CD4-positive, alpha-beta T cell (primary cell): ENCODE measurements at regions of chr5 and their contacts with region 1.

Region 1: GRCh38 chr5:14871210-14872069 is at the start of gene ANKH:
- DNase-seq: peak; percentile 58 to 95 (median 82)
- ATAC-seq: peak; percentile 85
- H3K4me3 ChIP-seq: peak within 1 kb of the TSS; percentile 82
- H3K4me3 Mint-ChIP-seq: peak within 1 kb of the TSS; percentile 96
- H3K27ac ChIP-seq: peak within 1 kb of the TSS; percentile 64 to 70
- H3K27ac Mint-ChIP-seq: peak within 1 kb of the TSS; percentile 87
- H3K4me1 ChIP-seq: peaks cover 23% of the 10 kb centered on the region
- H3K4me1 Mint-ChIP-seq: peaks cover 31% of the 10 kb centered on the region
- H3K27me3 ChIP-seq: no peaks in the 10 kb centered on the region
- H3K27me3 Mint-ChIP-seq: no peaks in the 10 kb centered on the region
- CTCF ChIP-seq: no peak
- total RNA-seq, gene ANKH: 69.5 to 72.3 TPM

Region 2: DNA sequence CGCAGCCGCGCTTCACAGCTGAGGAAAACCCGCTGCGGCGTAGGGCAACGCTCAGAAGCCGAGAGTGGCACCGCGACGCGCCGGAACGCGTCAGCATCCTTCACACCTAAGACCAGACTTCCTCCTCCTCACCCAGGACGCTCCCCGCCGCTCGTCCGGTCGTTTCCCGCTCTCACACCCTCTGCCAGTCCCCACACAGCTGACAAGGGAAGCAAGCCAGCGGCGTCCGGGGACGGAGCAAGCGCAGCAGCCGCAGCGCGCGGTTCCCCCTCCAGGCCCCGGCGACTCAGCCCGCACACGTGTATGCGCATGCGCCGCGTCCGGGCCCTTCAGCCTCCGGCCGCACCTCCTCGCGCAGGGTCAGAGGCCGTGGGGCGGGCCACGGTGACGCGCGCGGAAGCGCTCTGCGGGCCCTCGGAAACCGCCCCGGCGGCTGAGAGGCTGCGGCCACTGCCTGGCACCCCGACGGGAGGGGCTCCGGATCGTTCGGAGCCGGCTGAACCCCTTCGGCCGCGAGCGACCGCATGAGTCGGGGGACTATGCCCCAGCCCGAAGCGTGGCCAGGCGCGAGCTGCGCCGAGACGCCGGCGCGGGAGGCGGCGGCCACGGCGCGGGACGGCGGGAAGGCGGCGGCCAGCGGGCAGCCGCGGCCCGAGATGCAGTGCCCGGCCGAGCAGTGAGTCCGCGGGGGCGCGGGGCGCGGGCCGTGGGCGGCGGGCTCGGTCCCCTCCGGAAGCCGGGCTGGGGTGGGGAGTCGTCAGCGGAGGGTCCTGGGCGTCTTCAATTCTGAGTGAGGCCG is 206.9 kb before region 1 on chr5 and contains the start of gene OTULIN:
- CTCF ChIA-PET with region 1: interaction called, 4 read pairs
- POLR2A ChIA-PET with region 1: no interaction called
- intact Hi-C with region 1: loop called in 1 of 2 experiments (anchors 2 kb)
- DNase-seq: peak; percentile 62 to 96 (median 80)
- ATAC-seq: peak; percentile 73
- H3K4me3 ChIP-seq: peak within 1 kb of the TSS; percentile 75
- H3K4me3 Mint-ChIP-seq: peak within 1 kb of the TSS; percentile 90
- H3K27ac ChIP-seq: peak within 1 kb of the TSS; percentile 77 to 82
- H3K27ac Mint-ChIP-seq: peak within 1 kb of the TSS; percentile 90
- H3K4me1 ChIP-seq: peaks cover 52% of the 10 kb centered on the region
- H3K4me1 Mint-ChIP-seq: peaks cover 77% of the 10 kb centered on the region
- H3K27me3 ChIP-seq: no peaks in the 10 kb centered on the region
- H3K27me3 Mint-ChIP-seq: no peaks in the 10 kb centered on the region
- CTCF ChIP-seq: no peak
- total RNA-seq, gene OTULIN: 69.4 to 77.0 TPM

Region 3: GRCh38 chr5:14706615-14707021 is 164.8 kb before region 1 on chr5:
- CTCF ChIA-PET with region 1: interaction called, 5 read pairs
- POLR2A ChIA-PET with region 1: interaction called, 35 read pairs
- intact Hi-C with region 1: loop called in 1 of 2 experiments (anchors 5 kb)
- DNase-seq: peak; percentile 32 to 84 (median 57)
- ATAC-seq: peak; percentile 95
- H3K4me3 ChIP-seq: peak overlapping the region; percentile 7
- H3K4me3 Mint-ChIP-seq: peak overlapping the region; percentile 84
- H3K27ac ChIP-seq: peak overlapping the region; percentile 85 to 87
- H3K27ac Mint-ChIP-seq: peak overlapping the region; percentile 96
- H3K4me1 ChIP-seq: peaks cover 73% of the 10 kb centered on the region
- H3K4me1 Mint-ChIP-seq: peaks cover 93% of the 10 kb centered on the region
- H3K27me3 ChIP-seq: no peaks in the 10 kb centered on the region
- H3K27me3 Mint-ChIP-seq: no peaks in the 10 kb centered on the region
- CTCF ChIP-seq: no peak

Region 4: DNA sequence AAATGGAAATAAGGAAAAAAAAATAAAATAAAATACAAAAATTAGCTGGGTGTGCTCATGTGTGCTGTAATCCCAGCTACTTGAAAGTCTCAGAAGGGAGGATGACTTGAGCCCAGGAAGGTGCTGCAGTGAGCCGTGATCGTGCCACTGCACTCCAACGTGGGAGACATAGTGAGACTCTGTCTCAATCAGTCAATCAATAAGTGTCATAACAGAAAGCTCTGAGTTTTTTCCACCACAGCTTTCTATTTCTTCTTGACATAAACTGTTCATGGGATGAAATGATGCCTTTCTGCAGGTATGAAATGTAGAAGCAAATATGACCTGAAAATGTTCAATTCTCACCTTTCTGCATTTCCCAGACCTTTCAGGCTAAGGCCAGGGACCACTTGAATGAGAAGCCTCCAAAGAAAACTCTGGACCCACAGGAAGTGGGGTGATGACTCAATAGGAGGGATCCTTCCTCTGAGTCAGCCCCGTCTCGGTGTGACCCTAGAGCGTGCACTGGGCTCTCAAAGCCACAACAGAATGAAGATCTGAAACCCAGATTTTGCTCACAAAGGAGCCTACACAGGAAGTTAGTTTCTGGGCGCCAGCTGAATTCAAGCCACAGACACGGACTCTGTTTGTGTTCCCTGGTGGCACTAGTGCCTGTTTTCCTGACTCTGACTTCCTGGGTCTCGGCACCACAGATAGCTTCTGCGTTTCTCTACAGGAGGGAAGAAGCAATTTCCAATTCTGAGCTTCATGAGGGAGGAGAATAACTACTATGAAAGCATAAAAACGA is 61.9 kb before region 1 on chr5:
- CTCF ChIA-PET with region 1: interaction called, 14 read pairs
- POLR2A ChIA-PET with region 1: interaction called, 14 read pairs
- intact Hi-C with region 1: loop called in 1 of 2 experiments (anchors 2 kb)
- DNase-seq: peak; percentile 26 to 87 (median 66)
- ATAC-seq: peak; percentile 88
- H3K4me3 ChIP-seq: peak overlapping the region; percentile 26
- H3K4me3 Mint-ChIP-seq: peak overlapping the region; percentile 71
- H3K27ac ChIP-seq: peak overlapping the region; percentile 53 to 55
- H3K27ac Mint-ChIP-seq: peak overlapping the region; percentile 90
- H3K4me1 ChIP-seq: peaks cover 43% of the 10 kb centered on the region
- H3K4me1 Mint-ChIP-seq: peaks cover 76% of the 10 kb centered on the region
- H3K27me3 ChIP-seq: no peaks in the 10 kb centered on the region
- H3K27me3 Mint-ChIP-seq: no peaks in the 10 kb centered on the region
- CTCF ChIP-seq: no peak

Region 5: GRCh38 chr5:14849516-14850294 is 21.7 kb before region 1 on chr5:
- CTCF ChIA-PET with region 1: no interaction called
- POLR2A ChIA-PET with region 1: interaction called, 11 read pairs
- intact Hi-C with region 1: no loop called
- DNase-seq: no peak
- ATAC-seq: no peak
- H3K4me3 ChIP-seq: no peak overlapping the region
- H3K4me3 Mint-ChIP-seq: no peak overlapping the region
- H3K27ac ChIP-seq: no peak overlapping the region
- H3K27ac Mint-ChIP-seq: no peak overlapping the region
- H3K4me1 ChIP-seq: no peaks in the 10 kb centered on the region
- H3K4me1 Mint-ChIP-seq: peaks cover 32% of the 10 kb centered on the region
- H3K27me3 ChIP-seq: no peaks in the 10 kb centered on the region
- H3K27me3 Mint-ChIP-seq: no peaks in the 10 kb centered on the region
- CTCF ChIP-seq: no peak

Region 6: GRCh38 chr5:15003511-15003920 is 132.1 kb after region 1 on chr5:
- CTCF ChIA-PET with region 1: interaction called, 3 read pairs
- POLR2A ChIA-PET with region 1: no interaction called
- intact Hi-C with region 1: loop called (anchors 5 kb)
- DNase-seq: peak; percentile 23 to 84 (median 40)
- ATAC-seq: peak; percentile 100
- H3K4me3 ChIP-seq: no peak overlapping the region
- H3K4me3 Mint-ChIP-seq: no peak overlapping the region
- H3K27ac ChIP-seq: no peak overlapping the region
- H3K27ac Mint-ChIP-seq: no peak overlapping the region
- H3K4me1 ChIP-seq: no peaks in the 10 kb centered on the region
- H3K4me1 Mint-ChIP-seq: peaks cover 6% of the 10 kb centered on the region
- H3K27me3 ChIP-seq: no peaks in the 10 kb centered on the region
- H3K27me3 Mint-ChIP-seq: no peaks in the 10 kb centered on the region
- CTCF ChIP-seq: peak; percentile 81